ENCODE measurements at regions of chr15 and their contacts with region 1.

Region 1: DNA sequence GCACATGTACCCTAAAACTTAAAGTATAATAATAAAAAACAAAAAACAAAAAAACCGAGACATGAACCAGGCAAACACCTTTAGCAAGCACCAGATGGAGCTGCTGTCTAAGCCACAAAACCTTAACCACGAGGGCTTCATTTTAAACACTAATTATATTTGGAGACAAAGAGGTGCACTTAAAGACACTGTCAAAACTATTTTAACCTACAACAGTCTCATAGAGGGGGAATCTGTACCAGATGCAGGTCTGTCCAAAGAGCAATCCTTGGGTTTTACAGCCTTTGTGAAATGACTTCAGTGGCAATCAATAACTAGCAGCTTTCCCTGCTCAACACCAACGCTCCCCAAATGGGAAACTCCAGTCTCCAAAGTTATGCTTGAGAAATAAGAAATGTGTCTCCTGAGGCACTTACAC is 115.7 kb upstream of the TSPAN3 start:
- DNase-seq: peak; percentile 39
- ATAC-seq: peak; percentile 32
- H3K4me3 ChIP-seq: no peak overlapping the region
- H3K27ac ChIP-seq: peak overlapping the region; percentile 59
- H3K4me1 ChIP-seq: peaks cover 61% of the 10 kb centered on the region
- H3K27me3 ChIP-seq: no peaks in the 10 kb centered on the region
- CTCF ChIP-seq: peak; percentile 64 to 73 (median 67)
- EP300 ChIP-seq: no peak
- POLR2A ChIP-seq: no peak
- RAD21 ChIP-seq: peak; percentile 95

Region 2: DNA sequence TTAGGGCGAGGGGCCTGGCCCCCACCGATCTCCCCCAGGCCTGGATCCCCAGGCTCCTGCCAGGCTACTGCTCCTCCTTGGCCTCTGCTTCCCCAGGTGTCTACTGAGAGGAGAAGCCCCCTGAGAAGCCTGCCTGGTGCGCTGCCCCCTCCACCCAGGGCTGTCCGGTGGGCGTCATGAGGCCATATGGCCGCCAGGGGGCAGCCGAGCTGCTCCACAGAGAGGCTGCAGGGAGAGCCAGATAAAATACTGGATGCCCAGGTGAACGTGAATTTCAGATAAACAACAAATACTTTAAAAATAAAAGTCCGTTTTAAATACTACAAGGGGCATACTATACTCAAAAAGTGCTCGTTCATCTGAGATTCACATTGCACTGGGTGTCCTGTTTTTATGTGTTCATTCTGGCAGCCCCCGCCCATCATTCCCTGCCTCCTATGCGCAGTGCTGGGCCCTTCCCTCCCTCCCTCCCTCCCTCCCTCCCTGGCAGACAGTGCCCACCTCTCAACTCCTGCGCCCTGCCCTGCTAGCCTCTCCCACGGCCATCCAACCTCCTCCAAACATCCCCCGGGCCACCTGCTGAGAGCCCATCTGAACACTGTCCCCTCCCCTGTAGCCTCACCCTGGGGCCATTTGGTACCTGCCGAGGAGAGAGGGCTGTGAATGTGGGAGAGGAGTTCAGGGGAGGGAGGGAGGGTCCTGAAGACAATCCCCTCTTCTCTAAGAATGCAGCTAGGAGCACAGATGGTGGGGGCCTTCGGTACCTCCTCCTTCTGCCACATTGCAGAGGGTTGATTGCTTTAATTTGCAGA is 162.1 kb before region 1 on chr15:
- CTCF ChIA-PET with region 1: interaction called, 3 read pairs
- POLR2A ChIA-PET with region 1: no interaction called
- RAD21 ChIA-PET with region 1: interaction called, 9 read pairs
- SMC1A ChIA-PET with region 1: interaction called, 11 read pairs
- in situ Hi-C with region 1: no loop called
- intact Hi-C with region 1: no loop called
- DNase-seq: no peak
- ATAC-seq: peak; percentile 66
- H3K4me3 ChIP-seq: no peak overlapping the region
- H3K27ac ChIP-seq: no peak overlapping the region
- H3K4me1 ChIP-seq: peaks cover 33% of the 10 kb centered on the region
- H3K27me3 ChIP-seq: no peaks in the 10 kb centered on the region
- CTCF ChIP-seq: peak; percentile 75 to 93 (median 83)
- EP300 ChIP-seq: no peak
- POLR2A ChIP-seq: no peak
- RAD21 ChIP-seq: peak; percentile 83

Region 3: DNA sequence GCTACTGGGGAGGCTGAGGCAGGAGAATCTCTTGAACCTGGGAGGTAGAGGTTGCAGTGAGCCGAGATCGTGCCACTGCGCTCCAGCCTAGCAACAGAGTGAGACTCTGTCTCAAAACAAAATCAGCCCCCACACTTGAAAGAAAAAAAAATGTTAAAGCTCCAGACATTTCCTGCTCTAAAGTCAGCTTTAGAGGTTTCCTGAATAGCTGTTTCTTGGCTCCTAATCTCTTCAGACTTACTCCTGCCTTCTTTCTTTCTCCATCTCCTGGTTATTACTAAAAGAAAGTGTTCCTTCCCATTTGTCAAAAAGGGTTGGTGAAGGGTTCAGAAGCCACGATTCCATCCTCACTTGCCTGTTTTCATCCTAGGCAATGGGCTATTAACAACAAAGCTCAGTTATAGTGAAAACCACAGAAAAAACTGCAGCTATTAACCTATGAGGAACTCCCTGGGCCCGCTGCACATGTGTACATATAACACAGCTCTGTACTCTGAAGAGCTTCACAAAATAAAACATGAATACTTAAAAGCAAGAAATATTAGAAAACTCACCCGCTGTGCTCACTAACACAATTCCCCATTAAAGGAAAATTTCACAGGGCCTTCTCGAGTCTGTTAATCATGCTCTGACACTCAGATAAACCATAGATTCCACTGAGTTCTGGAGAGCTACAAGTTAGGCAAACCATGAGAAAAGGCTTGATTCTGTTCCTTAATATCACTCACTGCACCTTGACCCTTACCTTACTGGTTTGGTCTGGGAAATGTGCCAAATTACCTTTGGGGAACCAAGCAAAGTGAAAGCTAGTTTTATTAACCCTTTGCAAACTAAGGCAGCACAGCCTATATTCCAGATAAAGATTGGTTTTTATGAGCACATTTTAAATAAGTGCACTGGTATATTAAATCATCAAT is 25.8 kb before region 1 on chr15:
- CTCF ChIA-PET with region 1: interaction called, 10 read pairs
- POLR2A ChIA-PET with region 1: interaction called, 4 read pairs
- RAD21 ChIA-PET with region 1: interaction called, 26 read pairs
- SMC1A ChIA-PET with region 1: interaction called, 25 read pairs
- in situ Hi-C with region 1: no loop called
- intact Hi-C with region 1: no loop called
- DNase-seq: no peak
- ATAC-seq: peak; percentile 50
- H3K4me3 ChIP-seq: no peak overlapping the region
- H3K27ac ChIP-seq: no peak overlapping the region
- H3K4me1 ChIP-seq: no peaks in the 10 kb centered on the region
- H3K27me3 ChIP-seq: no peaks in the 10 kb centered on the region
- CTCF ChIP-seq: no peak
- EP300 ChIP-seq: no peak
- POLR2A ChIP-seq: no peak
- RAD21 ChIP-seq: no peak

Region 4: GRCh38 chr15:77312523-77312922 is 125.9 kb after region 1 on chr15:
- CTCF ChIA-PET with region 1: interaction called, 4 read pairs
- POLR2A ChIA-PET with region 1: no interaction called
- RAD21 ChIA-PET with region 1: interaction called, 13 read pairs
- SMC1A ChIA-PET with region 1: interaction called, 13 read pairs
- in situ Hi-C with region 1: no loop called
- intact Hi-C with region 1: no loop called
- DNase-seq: no peak
- ATAC-seq: no peak
- H3K4me3 ChIP-seq: no peak overlapping the region
- H3K27ac ChIP-seq: no peak overlapping the region
- H3K4me1 ChIP-seq: peaks cover 7% of the 10 kb centered on the region; the same call in 1 of the 2 replicates
- H3K27me3 ChIP-seq: no peaks in the 10 kb centered on the region
- CTCF ChIP-seq: no peak
- EP300 ChIP-seq: no peak
- POLR2A ChIP-seq: no peak
- RAD21 ChIP-seq: no peak

Region 5: DNA sequence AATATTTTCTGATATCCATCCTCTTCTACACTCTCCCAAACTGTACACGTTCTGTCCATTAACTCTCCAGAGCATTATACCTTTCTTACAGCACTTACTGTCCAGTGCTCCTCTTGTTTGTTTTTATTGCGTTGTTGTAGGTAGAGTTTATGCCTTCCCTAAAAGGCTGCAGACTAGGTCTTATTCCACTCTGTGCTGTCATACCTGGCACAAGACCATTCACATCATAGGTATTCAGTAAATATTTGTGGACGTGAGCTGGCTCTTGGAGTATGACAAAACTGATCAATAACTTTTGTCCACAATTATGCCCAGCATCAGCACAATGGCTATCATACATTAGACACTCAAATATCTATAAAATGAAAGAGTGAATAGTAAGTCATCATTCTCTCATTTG is 238.5 kb after region 1 on chr15:
- CTCF ChIA-PET with region 1: interaction called, 50 read pairs
- POLR2A ChIA-PET with region 1: interaction called, 8 read pairs
- RAD21 ChIA-PET with region 1: interaction called, 55 read pairs
- SMC1A ChIA-PET with region 1: interaction called, 60 read pairs
- in situ Hi-C with region 1: no loop called
- intact Hi-C with region 1: loop called (anchors 2 kb)
- DNase-seq: no peak
- ATAC-seq: no peak
- H3K4me3 ChIP-seq: no peak overlapping the region
- H3K27ac ChIP-seq: no peak overlapping the region
- H3K4me1 ChIP-seq: peaks cover 3% of the 10 kb centered on the region
- H3K27me3 ChIP-seq: no peaks in the 10 kb centered on the region
- CTCF ChIP-seq: no peak
- EP300 ChIP-seq: no peak
- POLR2A ChIP-seq: no peak
- RAD21 ChIP-seq: no peak

Region 6: GRCh38 chr15:77482570-77482969 is 296.0 kb after region 1 on chr15:
- CTCF ChIA-PET with region 1: interaction called, 8 read pairs
- POLR2A ChIA-PET with region 1: no interaction called
- RAD21 ChIA-PET with region 1: interaction called, 18 read pairs
- SMC1A ChIA-PET with region 1: interaction called, 19 read pairs
- in situ Hi-C with region 1: no loop called
- intact Hi-C with region 1: no loop called
- DNase-seq: no peak
- ATAC-seq: no peak
- H3K4me3 ChIP-seq: no peak overlapping the region
- H3K27ac ChIP-seq: no peak overlapping the region
- H3K4me1 ChIP-seq: no peaks in the 10 kb centered on the region
- H3K27me3 ChIP-seq: no peaks in the 10 kb centered on the region
- CTCF ChIP-seq: no peak
- EP300 ChIP-seq: no peak
- POLR2A ChIP-seq: no peak
- RAD21 ChIP-seq: no peak

Region 7: DNA sequence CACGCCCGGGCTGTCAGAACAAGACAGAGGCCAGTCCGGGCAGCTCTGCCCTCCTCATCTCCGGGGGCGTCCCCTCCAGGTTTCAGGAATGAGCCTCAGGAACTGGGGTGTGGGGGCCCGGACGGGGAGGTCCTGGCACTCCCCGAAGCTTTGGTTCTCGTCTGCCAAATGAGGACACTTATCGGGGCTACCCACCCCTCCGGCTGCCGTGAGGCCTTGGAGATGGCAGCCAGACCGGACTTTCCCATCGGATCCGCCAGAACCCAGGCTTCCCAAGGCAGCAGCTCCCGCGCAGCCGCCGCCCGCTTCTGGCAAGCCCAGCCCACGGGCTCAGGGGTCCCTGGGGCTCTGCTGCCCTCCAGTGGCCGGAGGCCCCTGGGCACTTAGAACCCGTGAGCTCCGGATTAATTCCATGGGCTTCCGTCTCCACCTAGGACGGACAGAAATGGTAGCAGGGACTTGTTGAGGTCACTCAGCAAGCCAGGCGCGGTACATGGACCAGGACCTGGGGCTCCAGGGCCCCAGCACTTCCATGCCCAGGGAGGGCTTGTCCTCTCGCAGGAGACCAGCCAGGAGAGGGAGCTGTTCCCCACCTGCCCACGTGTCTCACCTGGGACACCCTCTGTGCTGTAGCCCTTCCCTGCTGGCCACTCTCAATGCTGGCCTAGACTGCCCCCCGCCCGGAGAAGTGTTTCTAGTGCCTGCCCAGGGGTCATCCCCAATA is 356.7 kb after region 1 on chr15:
- CTCF ChIA-PET with region 1: interaction called, 455 read pairs
- POLR2A ChIA-PET with region 1: interaction called, 8 read pairs
- RAD21 ChIA-PET with region 1: interaction called, 286 read pairs
- SMC1A ChIA-PET with region 1: interaction called, 352 read pairs
- in situ Hi-C with region 1: loop called (anchors 5 kb)
- intact Hi-C with region 1: loop called (anchors 1 kb)
- DNase-seq: peak; percentile 32
- ATAC-seq: peak; percentile 96
- H3K4me3 ChIP-seq: peak overlapping the region; percentile 73
- H3K27ac ChIP-seq: peak overlapping the region; percentile 52; the same call in 1 of the 2 replicates
- H3K4me1 ChIP-seq: peaks cover 17% of the 10 kb centered on the region
- H3K27me3 ChIP-seq: no peaks in the 10 kb centered on the region
- CTCF ChIP-seq: peak; percentile 89 to 99 (median 93)
- EP300 ChIP-seq: no peak
- POLR2A ChIP-seq: peak; percentile 50; the same call in 1 of the 2 replicates
- RAD21 ChIP-seq: peak; percentile 98

Measured in GM12878 (cell line).